CD14-positive monocyte (primary cell): ENCODE measurements at regions of chr22 and their contacts with region 1.

Region 1: DNA sequence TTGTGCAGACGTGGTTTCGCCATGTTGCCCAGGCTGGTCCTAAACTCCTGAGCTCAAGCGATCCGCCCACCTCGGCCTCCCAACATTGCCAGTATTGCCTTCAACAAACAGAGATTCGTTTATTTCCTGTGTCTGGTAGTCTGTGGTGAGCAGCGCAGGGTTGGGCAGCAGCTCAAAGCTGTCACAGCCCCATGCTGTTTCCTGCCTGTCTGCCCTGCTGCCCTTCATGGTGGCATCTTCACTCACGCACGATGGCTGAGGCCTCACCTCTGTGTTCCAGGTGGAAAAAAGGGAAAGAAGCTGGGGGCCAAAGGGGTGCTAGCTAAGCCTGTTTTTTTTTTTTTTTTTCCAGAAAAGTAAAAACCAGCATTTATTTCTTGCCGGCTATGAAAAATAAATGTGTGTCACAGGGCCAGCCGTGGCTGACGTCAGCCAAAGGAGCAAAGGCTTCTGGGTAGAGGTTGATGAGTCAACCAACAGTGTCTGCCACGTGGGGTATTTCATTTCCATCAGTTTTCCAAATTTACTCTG is 28.8 kb downstream of the TBC1D22A start:
- DNase-seq: peak; percentile 83 to 91 (median 86)
- H3K4me3 ChIP-seq: peak overlapping the region; percentile 6 to 66 (median 37)
- H3K4me3 Mint-ChIP-seq: peak overlapping the region; percentile 75 to 89
- H3K27ac ChIP-seq: peak overlapping the region; percentile 92 to 98
- H3K27ac Mint-ChIP-seq: peak overlapping the region; percentile 97 to 99 (median 99)
- H3K4me1 ChIP-seq: peaks cover 17 to 21% of the 10 kb centered on the region in 2 donors
- H3K4me1 Mint-ChIP-seq: peaks cover 33% of the 10 kb centered on the region
- H3K27me3 ChIP-seq: no peaks in the 10 kb centered on the region
- H3K27me3 Mint-ChIP-seq: no peaks in the 10 kb centered on the region
- CTCF ChIP-seq: no peak

Region 2: DNA sequence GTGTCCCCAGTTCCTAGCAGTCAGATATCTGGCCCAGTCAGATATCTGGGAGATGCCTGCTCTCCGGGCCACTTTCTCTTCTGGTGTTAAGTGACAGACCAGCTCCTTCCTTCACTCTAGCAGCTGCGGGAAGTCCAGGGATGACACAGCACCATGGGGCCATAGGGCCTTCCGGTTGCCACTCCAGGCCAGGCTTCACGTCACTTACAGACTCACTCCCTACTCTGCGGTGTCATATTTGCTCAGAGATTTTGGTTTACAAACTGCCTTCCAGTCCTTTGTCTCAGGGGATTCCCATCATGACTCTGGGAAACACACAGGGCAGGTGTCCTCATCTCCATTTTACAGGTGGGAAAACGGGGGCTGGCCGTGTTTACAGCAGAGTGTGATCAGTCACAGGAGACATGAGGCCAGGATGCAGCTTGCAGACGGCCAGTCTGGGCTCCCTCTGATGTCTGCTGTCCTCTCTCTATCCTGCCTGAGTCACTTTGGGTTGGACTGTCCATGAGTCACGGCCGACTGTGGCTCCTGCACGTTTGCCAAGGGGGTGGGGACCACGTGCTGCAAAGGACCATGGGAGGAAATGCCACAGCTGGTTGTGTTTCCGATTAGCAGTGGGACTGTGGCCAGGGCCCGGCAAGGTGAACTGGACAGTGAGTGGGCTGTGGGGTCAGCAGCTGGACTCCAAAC is 37.0 kb before region 1 on chr22:
- intact Hi-C with region 1: loop called (anchors 2 to 5 kb)
- DNase-seq: peak; percentile 98 to 100 (median 98)
- H3K4me3 ChIP-seq: peak overlapping the region in 2 of 3 experiments; percentile 10 to 53
- H3K4me3 Mint-ChIP-seq: peak overlapping the region; percentile 56 to 79
- H3K27ac ChIP-seq: peak overlapping the region; percentile 100
- H3K27ac Mint-ChIP-seq: peak overlapping the region; percentile 100
- H3K4me1 ChIP-seq: peaks cover 91 to 92% of the 10 kb centered on the region in 2 donors
- H3K4me1 Mint-ChIP-seq: peaks cover 84% of the 10 kb centered on the region
- H3K27me3 ChIP-seq: no peaks in the 10 kb centered on the region
- H3K27me3 Mint-ChIP-seq: peaks cover 0 to 7% (median 5%) of the 10 kb centered on the region in 3 donors
- CTCF ChIP-seq: no peak

Region 3: DNA sequence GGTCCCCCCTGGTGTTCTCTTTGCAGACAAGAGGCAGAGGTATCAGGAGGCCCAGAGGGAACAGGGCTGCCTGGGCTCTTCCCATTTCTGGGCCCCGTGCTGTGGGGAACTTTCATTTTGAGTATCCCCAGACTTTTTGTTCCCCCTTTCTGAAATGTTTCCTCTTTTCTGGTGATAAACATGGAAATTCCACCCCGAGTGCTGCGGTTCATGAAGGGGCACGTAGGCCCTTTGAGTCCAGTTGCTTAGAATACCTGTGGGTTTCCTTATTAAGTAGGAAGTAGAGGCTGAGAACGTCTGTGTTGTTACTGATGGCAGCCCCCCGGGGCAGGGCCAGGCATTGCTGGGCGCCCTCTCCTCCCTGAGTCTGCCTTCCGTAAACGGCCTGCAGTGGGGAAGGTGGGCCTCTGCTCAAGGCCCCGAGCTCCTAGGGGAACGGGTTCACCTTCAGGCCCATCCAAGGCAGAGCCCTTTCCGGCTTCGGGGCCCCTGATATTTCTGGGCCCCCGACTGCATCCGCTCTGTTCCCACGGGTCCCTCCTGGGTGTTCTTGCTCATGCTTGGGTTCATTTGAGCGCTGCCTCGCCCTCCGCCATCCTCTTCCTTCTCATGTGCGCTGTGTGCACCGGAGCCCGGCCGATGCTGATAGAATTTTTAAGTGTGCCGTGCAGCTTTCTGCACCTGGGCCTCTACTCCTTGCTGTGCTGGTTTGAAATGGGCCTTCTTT is 16.9 kb before region 1 on chr22:
- intact Hi-C with region 1: loop called in 1 of 2 experiments (anchors 2 kb)
- DNase-seq: peak; percentile 85 to 97 (median 93)
- H3K4me3 ChIP-seq: peak overlapping the region in 1 of 3 experiments; percentile 61
- H3K4me3 Mint-ChIP-seq: peak overlapping the region; percentile 64 to 82
- H3K27ac ChIP-seq: peak overlapping the region; percentile 95
- H3K27ac Mint-ChIP-seq: peak overlapping the region; percentile 95 to 98 (median 97)
- H3K4me1 ChIP-seq: peaks cover 81% of the 10 kb centered on the region in 2 donors
- H3K4me1 Mint-ChIP-seq: peaks cover 80% of the 10 kb centered on the region
- H3K27me3 ChIP-seq: no peaks in the 10 kb centered on the region
- H3K27me3 Mint-ChIP-seq: peaks cover 0 to 3% (median 1%) of the 10 kb centered on the region in 3 donors
- CTCF ChIP-seq: no peak